IMR-90 (cell line): ENCODE measurements at regions of chr17 and their contacts with region 1.

Region 1: GRCh38 chr17:13584701-13585080 is 17.0 kb downstream of the HS3ST3A1 start:
- DNase-seq: peak; percentile 76
- ATAC-seq: no peak
- H3K4me3 ChIP-seq: no peak overlapping the region
- H3K27ac ChIP-seq: peak overlapping the region; percentile 30; the same call in 1 of the 2 replicates
- H3K4me1 ChIP-seq: peaks cover 16% of the 10 kb centered on the region
- H3K27me3 ChIP-seq: no peaks in the 10 kb centered on the region
- CTCF ChIP-seq: no peak
- POLR2A ChIP-seq: no peak
- RAD21 ChIP-seq: no peak

Region 2: GRCh38 chr17:13415807-13416416 is 168.8 kb before region 1 on chr17:
- CTCF ChIA-PET with region 1: no interaction called
- POLR2A ChIA-PET with region 1: no interaction called
- dilution Hi-C with region 1: no loop called
- in situ Hi-C with region 1: no loop called
- intact Hi-C with region 1: loop called (anchors 5 kb)
- DNase-seq: peak; percentile 89
- ATAC-seq: peak; percentile 55
- H3K4me3 ChIP-seq: no peak overlapping the region
- H3K27ac ChIP-seq: peak overlapping the region; percentile 17; the same call in 1 of the 2 replicates
- H3K4me1 ChIP-seq: peaks cover 22% of the 10 kb centered on the region
- H3K27me3 ChIP-seq: no peaks in the 10 kb centered on the region
- CTCF ChIP-seq: no peak
- POLR2A ChIP-seq: no peak
- RAD21 ChIP-seq: no peak; the same call in 1 of the 2 replicates